Heart left ventricle (tissue), 16 donors: ENCODE measurements at regions of chr16 and their contacts with region 1.

Region 1: DNA sequence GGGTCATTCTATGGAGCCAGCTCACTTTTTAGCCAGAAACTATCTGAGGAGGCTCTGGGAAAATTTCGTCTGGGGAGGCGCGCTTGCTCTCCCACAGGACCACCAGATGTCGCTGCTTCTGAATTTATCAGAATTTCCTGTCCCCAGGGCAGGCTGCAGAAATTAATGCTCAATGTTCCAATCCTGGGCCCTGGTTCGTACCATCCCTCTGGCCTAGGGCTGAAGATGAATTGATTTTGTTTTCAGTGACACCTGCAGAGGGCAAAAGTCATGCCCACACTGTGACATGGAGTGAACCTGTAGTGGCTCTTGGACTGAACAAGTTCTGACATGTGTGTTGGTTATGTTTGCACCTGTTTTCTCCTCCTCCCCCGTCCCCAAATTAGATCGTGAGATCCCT is 482.6 kb downstream of the NPIPA7 start:
- DNase-seq: peak in 4 of 5 donors; percentile 21 to 52 (median 35)
- ATAC-seq: peak in 1 of 4 donors; percentile 33
- H3K4me3 ChIP-seq: no peak overlapping the region
- H3K27ac ChIP-seq: no peak overlapping the region
- H3K4me1 ChIP-seq: peaks cover 0 to 22% (median 4%) of the 10 kb centered on the region in 12 donors
- H3K27me3 ChIP-seq: peaks cover 0 to 13% (median 0%) of the 10 kb centered on the region in 9 donors
- CTCF ChIP-seq: peak; percentile 56 to 80 (median 66)
- POLR2A ChIP-seq: no peak

Region 2: DNA sequence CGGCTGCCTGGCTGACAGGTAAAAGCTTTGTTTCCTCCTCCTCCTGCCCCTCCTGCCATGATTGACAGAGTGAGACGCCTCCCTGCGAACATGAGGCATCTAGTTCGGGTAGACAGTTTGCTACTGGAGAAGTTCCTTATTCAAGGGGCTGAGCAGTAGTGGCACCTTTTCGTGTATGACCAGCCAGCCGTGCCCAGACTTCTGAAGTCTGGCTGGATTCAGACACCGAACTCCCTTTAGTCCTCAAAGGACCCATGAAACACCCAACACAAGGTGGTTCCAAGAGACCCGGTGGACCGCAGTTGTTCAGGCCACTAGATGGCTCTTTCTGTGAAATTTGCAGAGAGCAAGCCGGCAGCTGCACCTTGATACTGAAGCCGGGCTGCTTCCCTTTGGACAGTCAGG is 416.4 kb after region 1 on chr16:
- intact Hi-C with region 1: loop called in 2 of 10 experiments (anchors 10 kb)
- DNase-seq: peak in 2 of 5 donors; percentile 28 to 45
- ATAC-seq: peak in 3 of 4 donors; percentile 63 to 69 (median 65)
- H3K4me3 ChIP-seq: no peak overlapping the region
- H3K27ac ChIP-seq: no peak overlapping the region
- H3K4me1 ChIP-seq: peaks cover 0 to 6% (median 0%) of the 10 kb centered on the region in 12 donors
- H3K27me3 ChIP-seq: no peaks in the 10 kb centered on the region
- CTCF ChIP-seq: peak; percentile 9 to 61 (median 44)
- POLR2A ChIP-seq: no peak

Region 3: GRCh38 chr16:17416461-17417311 is 555.1 kb after region 1 on chr16:
- intact Hi-C with region 1: loop called in 1 of 10 experiments (anchors 10 kb)
- DNase-seq: peak in 4 of 5 donors; percentile 25 to 46 (median 32)
- ATAC-seq: peak; percentile 43 to 80 (median 74)
- H3K4me3 ChIP-seq: peak overlapping the region in 3 of 12 donors; percentile 1 to 30 (median 4)
- H3K27ac ChIP-seq: peak overlapping the region in 3 of 12 donors; percentile 37 to 74 (median 38)
- H3K4me1 ChIP-seq: peaks cover 0 to 24% (median 1%) of the 10 kb centered on the region in 12 donors
- H3K27me3 ChIP-seq: no peaks in the 10 kb centered on the region
- CTCF ChIP-seq: peak in 5 of 12 donors; percentile 13 to 31 (median 21)
- POLR2A ChIP-seq: no peak

Region 4: GRCh38 chr16:17476414-17477270 is 615.1 kb after region 1 on chr16:
- intact Hi-C with region 1: loop called in 2 of 10 experiments (anchors 10 kb)
- DNase-seq: peak in 1 of 5 donors; percentile 18
- ATAC-seq: peak; percentile 30 to 76 (median 54)
- H3K4me3 ChIP-seq: no peak overlapping the region
- H3K27ac ChIP-seq: no peak overlapping the region
- H3K4me1 ChIP-seq: peaks cover 0 to 16% (median 0%) of the 10 kb centered on the region in 12 donors
- H3K27me3 ChIP-seq: peaks cover 0 to 31% (median 10%) of the 10 kb centered on the region in 9 donors
- CTCF ChIP-seq: peak in 10 of 12 donors; percentile 29 to 60 (median 47)
- POLR2A ChIP-seq: no peak

Region 5: GRCh38 chr16:17585449-17586074 is 724.0 kb after region 1 on chr16:
- intact Hi-C with region 1: loop called in 3 of 10 experiments (anchors 5 to 10 kb)
- DNase-seq: no peak
- ATAC-seq: no peak
- H3K4me3 ChIP-seq: no peak overlapping the region
- H3K27ac ChIP-seq: no peak overlapping the region
- H3K4me1 ChIP-seq: no peaks in the 10 kb centered on the region
- H3K27me3 ChIP-seq: no peaks in the 10 kb centered on the region
- CTCF ChIP-seq: no peak
- POLR2A ChIP-seq: no peak